Common myeloid progenitor, CD34-positive (primary cell): ENCODE measurements at regions of chr16 and their contacts with region 1.

Region 1: DNA sequence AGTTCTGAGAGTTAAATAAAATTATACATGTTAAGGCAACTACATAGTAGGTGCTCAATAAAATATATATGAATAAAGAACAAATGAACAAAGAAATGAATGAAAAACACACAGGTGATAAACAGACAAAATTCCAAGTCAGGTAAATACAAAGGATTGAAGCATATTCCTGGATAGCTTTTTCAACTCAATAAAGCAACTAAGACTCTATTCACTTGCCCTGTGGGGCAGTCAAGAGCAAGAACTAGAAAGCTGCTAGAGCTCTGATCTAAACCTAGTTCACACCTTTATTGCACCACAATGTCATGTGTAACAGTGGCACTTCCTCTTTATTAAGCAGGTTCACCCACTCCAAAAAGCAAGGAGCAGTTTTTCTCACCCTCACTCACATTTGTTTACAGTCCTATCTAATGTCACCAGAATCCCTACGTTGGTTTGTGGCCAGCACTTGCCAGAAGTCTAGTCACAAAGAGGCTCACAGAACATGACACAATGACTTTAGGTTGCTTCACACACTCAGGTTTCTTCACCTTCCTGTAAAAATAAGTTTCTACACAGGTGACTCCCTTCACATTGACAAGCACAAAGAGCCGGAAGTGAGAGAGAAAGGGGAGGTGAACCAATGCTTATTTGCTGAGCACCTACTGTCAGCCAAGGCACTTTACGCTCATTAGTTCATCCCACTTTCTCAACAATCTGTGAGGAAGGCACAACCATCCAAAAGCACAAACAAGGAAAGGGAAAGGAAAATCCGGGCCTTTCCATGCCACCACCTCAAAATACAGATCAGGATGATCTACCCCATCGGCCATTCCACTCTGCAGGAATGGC is 70.8 kb downstream of the XPO6 start:
- DNase-seq: peak; percentile 77 to 96 (median 93)
- H3K4me3 ChIP-seq: peak overlapping the region in 1 of 7 experiments; percentile 16
- H3K27ac ChIP-seq: peak overlapping the region in 1 of 2 experiments; percentile 74
- H3K4me1 ChIP-seq: peaks cover 34 to 54% (median 40%) of the 10 kb centered on the region in 4 experiments
- H3K27me3 ChIP-seq: no peaks in the 10 kb centered on the region

Region 2: GRCh38 chr16:28211712-28212534 is 70.9 kb after region 1 on chr16 and contains the start of gene XPO6:
- CTCF ChIA-PET with region 1: interaction called, 12 read pairs
- POLR2A ChIA-PET with region 1: no interaction called
- DNase-seq: peak; percentile 93 to 97 (median 96)
- H3K4me3 ChIP-seq: peak within 1 kb of the TSS; percentile 63 to 88 (median 81)
- H3K27ac ChIP-seq: peak within 1 kb of the TSS; percentile 33 to 79
- H3K4me1 ChIP-seq: peaks cover 8 to 27% (median 23%) of the 10 kb centered on the region in 4 experiments
- H3K27me3 ChIP-seq: no peaks in the 10 kb centered on the region